Heart right ventricle (tissue), 16 donors: ENCODE measurements at regions of chr22 and their contacts with region 1.

Region 1: GRCh38 chr22:20016734-20017621 is at the start of gene ARVCF:
- DNase-seq: peak; percentile 94
- ATAC-seq: peak; percentile 39 to 75 (median 72)
- H3K4me3 ChIP-seq: peak within 1 kb of the TSS; percentile 51 to 96 (median 79)
- H3K27ac ChIP-seq: peak within 1 kb of the TSS in 6 of 10 donors; percentile 10 to 62 (median 36)
- H3K4me1 ChIP-seq: peaks cover 14 to 52% (median 39%) of the 10 kb centered on the region in 9 donors
- H3K27me3 ChIP-seq: peaks cover 0 to 26% (median 0%) of the 10 kb centered on the region in 7 donors
- CTCF ChIP-seq: peak in 8 of 9 donors; percentile 12 to 48 (median 28)
- total RNA-seq, gene ARVCF: 22.2 to 53.5 (median 32.1) TPM

Region 2: GRCh38 chr22:19779685-19780268 is 237.2 kb before region 1 on chr22:
- intact Hi-C with region 1: no loop called
- DNase-seq: no peak
- ATAC-seq: no peak
- H3K4me3 ChIP-seq: no peak overlapping the region
- H3K27ac ChIP-seq: no peak overlapping the region
- H3K4me1 ChIP-seq: peaks cover 0 to 6% (median 0%) of the 10 kb centered on the region in 9 donors
- H3K27me3 ChIP-seq: peaks cover 8 to 76% (median 34%) of the 10 kb centered on the region in 7 donors
- CTCF ChIP-seq: no peak

Region 3: DNA sequence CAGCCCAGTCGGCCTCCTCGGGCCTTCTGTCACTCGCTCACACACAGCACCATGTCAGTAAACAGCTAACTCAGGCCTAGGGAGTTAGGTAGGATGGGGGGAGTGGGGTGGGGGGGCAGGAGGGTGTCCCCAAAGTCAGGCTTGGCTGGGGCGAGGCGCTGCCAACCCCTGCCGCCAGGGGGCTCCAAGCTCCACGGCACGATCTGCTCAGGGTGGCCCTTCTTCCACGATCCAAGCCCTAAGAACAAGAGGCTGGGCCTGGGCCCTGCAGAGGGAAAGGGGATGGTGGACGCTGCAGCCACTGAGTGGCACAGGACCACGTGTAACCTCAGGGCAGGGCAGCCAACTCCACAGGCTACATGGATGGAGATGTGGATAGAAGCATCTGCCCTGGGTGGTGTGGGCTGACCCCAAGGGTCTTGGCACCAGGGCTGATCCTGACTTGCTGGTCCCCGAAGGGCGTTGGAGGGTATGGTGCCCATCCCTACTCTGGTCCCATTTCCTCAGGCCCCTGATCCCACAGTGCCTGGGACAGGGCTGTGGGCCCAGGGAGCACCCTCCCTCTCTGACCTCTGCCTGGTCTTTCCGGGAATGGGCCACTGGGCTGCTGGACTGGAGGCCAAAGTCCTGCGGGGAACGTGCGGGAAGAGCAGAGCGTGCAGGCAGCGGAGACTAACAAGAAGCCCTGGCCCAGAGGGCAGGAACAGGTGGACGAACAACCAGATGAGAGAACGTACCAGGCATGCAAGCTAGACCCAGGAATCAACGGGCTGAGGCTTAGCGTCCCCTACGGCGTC is 46.3 kb before region 1 on chr22:
- intact Hi-C with region 1: loop called (anchors 1 to 2 kb)
- DNase-seq: peak; percentile 50 to 76
- ATAC-seq: peak; percentile 63 to 83 (median 78)
- H3K4me3 ChIP-seq: no peak overlapping the region
- H3K27ac ChIP-seq: peak overlapping the region in 3 of 10 donors; percentile 15 to 17 (median 15)
- H3K4me1 ChIP-seq: peaks cover 0 to 24% (median 8%) of the 10 kb centered on the region in 9 donors
- H3K27me3 ChIP-seq: no peaks in the 10 kb centered on the region
- CTCF ChIP-seq: peak; percentile 90 to 100 (median 95)

Region 4: DNA sequence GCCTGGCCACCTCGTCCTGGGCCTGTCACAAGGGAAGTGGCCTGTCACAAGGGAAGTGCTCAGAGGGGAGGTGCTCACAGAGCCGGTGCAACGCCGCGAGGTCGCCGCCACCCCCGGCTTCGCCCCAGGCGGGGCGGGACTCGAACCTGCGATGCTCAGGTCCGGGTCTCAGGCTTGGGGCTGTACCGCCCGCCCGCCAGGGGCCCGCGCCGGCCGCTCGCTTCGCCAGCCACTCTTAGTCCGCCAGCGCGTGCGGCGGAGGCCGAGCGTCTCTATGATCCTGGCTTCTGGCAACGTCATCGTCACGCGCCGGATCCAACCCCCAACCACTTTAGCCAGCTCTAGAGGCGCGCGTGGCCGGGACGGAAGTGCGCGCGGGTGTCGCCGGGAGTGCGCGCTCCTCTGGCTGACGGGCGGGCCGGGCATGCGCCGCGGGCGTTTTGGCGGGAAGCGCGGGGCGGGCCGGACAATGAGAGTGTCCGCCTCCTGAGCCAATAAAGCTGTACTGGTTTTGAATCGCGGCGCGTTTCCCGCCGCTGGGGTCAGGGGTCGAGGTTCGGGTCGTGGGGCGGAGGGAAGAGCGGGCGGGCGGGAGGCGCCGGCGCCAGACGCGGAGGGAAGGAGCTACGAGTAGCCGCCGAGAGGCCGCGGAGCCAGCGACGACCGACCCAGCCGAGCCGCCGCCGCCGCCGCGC is 100.1 kb after region 1 on chr22 and contains the start of gene TRMT2A:
- intact Hi-C with region 1: loop called in 1 of 10 experiments (anchors 5 kb)
- DNase-seq: peak; percentile 97
- ATAC-seq: peak; percentile 91 to 96 (median 94)
- H3K4me3 ChIP-seq: peak within 1 kb of the TSS; percentile 57 to 99 (median 82)
- H3K27ac ChIP-seq: peak within 1 kb of the TSS; percentile 26 to 93 (median 89)
- H3K4me1 ChIP-seq: peaks cover 19 to 57% (median 37%) of the 10 kb centered on the region in 9 donors
- H3K27me3 ChIP-seq: no peaks in the 10 kb centered on the region
- CTCF ChIP-seq: peak in 5 of 9 donors; percentile 20 to 49 (median 36)
- total RNA-seq, gene TRMT2A: 18.4 to 29.6 (median 25.8) TPM

Region 5: GRCh38 chr22:20211997-20212753 is 195.2 kb after region 1 on chr22:
- intact Hi-C with region 1: no loop called
- DNase-seq: peak; percentile 54 to 77
- ATAC-seq: peak; percentile 60 to 79 (median 69)
- H3K4me3 ChIP-seq: no peak overlapping the region
- H3K27ac ChIP-seq: no peak overlapping the region
- H3K4me1 ChIP-seq: peaks cover 15 to 29% (median 22%) of the 10 kb centered on the region in 9 donors
- H3K27me3 ChIP-seq: no peaks in the 10 kb centered on the region
- CTCF ChIP-seq: no peak

Region 6: GRCh38 chr22:20319745-20320658 is 303.0 kb after region 1 on chr22 and contains the start of gene DGCR6L:
- intact Hi-C with region 1: loop called in 1 of 10 experiments (anchors 10 kb)
- DNase-seq: peak; percentile 97 to 98
- ATAC-seq: peak; percentile 89 to 95 (median 92)
- H3K4me3 ChIP-seq: peak within 1 kb of the TSS; percentile 66 to 98 (median 90)
- H3K27ac ChIP-seq: peak within 1 kb of the TSS; percentile 77 to 98 (median 93)
- H3K4me1 ChIP-seq: peaks cover 13 to 47% (median 35%) of the 10 kb centered on the region in 9 donors
- H3K27me3 ChIP-seq: no peaks in the 10 kb centered on the region
- CTCF ChIP-seq: peak in 1 of 9 donors; percentile 2
- total RNA-seq, gene DGCR6L: 37.9 to 65.9 (median 40.5) TPM